ENCODE measurements at regions of chr7 and their contacts with region 1.

Region 1: DNA sequence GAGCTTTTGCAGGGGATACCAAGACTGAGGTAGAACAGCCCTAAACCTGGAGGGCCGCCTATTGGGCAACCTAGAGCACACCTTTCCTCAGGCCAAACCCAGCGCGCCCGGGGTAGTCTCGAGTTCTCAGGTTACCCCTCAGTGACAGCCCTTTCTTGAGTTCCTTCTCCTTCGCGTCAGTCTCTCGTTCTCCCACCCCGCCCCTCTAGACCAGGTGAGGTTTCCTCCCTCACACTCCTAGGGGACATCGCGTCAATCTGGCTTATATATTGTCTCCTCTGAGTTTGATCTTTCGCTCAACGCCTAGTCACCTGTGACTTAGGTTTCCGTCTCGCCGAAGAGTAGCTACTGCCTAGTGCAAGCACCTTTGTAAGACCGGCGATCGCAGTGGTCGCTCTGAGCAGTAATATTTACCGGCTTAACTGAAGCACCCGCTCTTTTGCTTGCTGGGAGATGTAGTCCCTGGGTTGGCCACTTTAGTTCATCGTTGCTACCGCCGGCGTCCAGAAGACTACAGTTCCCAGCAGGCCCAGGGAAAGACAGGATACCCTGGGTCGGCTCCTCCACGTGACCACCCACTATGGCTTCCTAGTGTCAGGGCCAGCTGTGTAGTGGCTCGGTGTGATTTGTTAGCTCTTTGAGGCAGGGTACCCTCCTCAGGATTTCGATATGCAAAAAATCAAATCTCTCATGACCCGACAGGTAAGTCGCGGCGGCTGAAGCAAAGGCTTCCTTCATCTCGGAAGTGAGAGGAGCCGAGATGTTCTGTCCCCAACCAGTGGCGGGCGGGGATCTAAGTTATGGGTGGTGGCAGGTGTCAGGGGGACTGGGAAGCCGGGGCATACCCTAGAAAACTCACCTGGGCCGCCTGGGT is at the start of gene VPS50:
- DNase-seq: peak; percentile 89
- H3K4me3 Mint-ChIP-seq: peak within 1 kb of the TSS; percentile 96
- H3K27ac Mint-ChIP-seq: peak within 1 kb of the TSS; percentile 85
- H3K4me1 Mint-ChIP-seq: peaks cover 13% of the 10 kb centered on the region
- H3K27me3 Mint-ChIP-seq: peaks cover 4% of the 10 kb centered on the region
- total RNA-seq, gene VPS50: 14.8 and 15.6 TPM in 2 replicates

Region 2: GRCh38 chr7:92245487-92246362 is 986.3 kb before region 1 on chr7 and contains the starts of genes ANKIB1 and KRIT1:
- intact Hi-C with region 1: loop called (anchors 5 kb)
- DNase-seq: peak; percentile 83
- H3K4me3 Mint-ChIP-seq: peak within 1 kb of the TSS; percentile 100
- H3K27ac Mint-ChIP-seq: peak within 1 kb of the TSS; percentile 100
- H3K4me1 Mint-ChIP-seq: peaks cover 30% of the 10 kb centered on the region
- H3K27me3 Mint-ChIP-seq: no peaks in the 10 kb centered on the region
- total RNA-seq, gene ANKIB1: 50.4 and 55.0 TPM in 2 replicates
- total RNA-seq, gene KRIT1: 37.4 and 43.0 TPM in 2 replicates

Region 3: DNA sequence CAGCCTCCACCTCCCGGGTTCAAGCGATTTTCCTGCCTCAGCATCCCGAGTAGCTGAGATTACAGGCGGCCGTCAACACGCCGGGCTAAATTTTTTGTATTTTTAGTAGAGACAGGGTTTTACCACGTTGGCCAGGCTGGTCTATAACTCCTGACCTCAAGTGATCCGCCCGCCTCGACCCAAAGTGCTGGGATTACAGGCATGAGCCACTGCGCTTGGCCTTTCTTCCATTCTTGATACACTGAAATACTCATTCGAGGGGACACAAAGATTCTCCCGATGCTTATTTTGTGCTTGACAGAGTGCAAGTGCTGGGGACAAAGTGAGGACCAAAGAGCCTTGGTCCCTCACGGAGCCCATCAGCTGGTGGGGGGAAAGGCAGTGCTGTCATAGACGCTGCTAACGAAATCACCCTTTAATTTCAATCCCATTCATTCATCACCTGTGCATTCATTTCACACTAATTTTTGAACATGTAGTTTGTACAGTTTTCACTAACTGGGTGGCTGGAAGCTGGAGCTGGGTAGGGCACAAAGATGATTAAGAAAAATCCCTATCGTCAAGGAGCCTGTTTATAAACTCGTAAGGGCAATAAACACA is 641.2 kb before region 1 on chr7:
- intact Hi-C with region 1: loop called (anchors 5 kb)
- DNase-seq: no peak
- H3K4me3 Mint-ChIP-seq: peak overlapping the region; percentile 93
- H3K27ac Mint-ChIP-seq: no peak overlapping the region
- H3K4me1 Mint-ChIP-seq: peaks cover 41% of the 10 kb centered on the region
- H3K27me3 Mint-ChIP-seq: no peaks in the 10 kb centered on the region

Region 4: GRCh38 chr7:93117852-93118530 is 114.0 kb before region 1 on chr7 and contains the start of gene SAMD9:
- intact Hi-C with region 1: loop called (anchors 1 kb)
- DNase-seq: peak; percentile 58
- H3K4me3 Mint-ChIP-seq: peak within 1 kb of the TSS; percentile 85
- H3K27ac Mint-ChIP-seq: peak within 1 kb of the TSS; percentile 90
- H3K4me1 Mint-ChIP-seq: peaks cover 38% of the 10 kb centered on the region
- H3K27me3 Mint-ChIP-seq: no peaks in the 10 kb centered on the region
- total RNA-seq, gene SAMD9: 9.3 and 9.4 TPM in 2 replicates

Region 5: GRCh38 chr7:93160410-93160809 is 71.6 kb before region 1 on chr7:
- intact Hi-C with region 1: loop called (anchors 5 kb)
- DNase-seq: no peak
- H3K4me3 Mint-ChIP-seq: no peak overlapping the region
- H3K27ac Mint-ChIP-seq: peak overlapping the region; percentile 58
- H3K4me1 Mint-ChIP-seq: peaks cover 16% of the 10 kb centered on the region
- H3K27me3 Mint-ChIP-seq: no peaks in the 10 kb centered on the region

Region 6: GRCh38 chr7:93249491-93250148 is 17.6 kb after region 1 on chr7:
- intact Hi-C with region 1: no loop called
- DNase-seq: no peak
- H3K4me3 Mint-ChIP-seq: no peak overlapping the region
- H3K27ac Mint-ChIP-seq: no peak overlapping the region
- H3K4me1 Mint-ChIP-seq: no peaks in the 10 kb centered on the region
- H3K27me3 Mint-ChIP-seq: no peaks in the 10 kb centered on the region

Region 7: GRCh38 chr7:93315896-93316295 is 83.9 kb after region 1 on chr7:
- intact Hi-C with region 1: no loop called
- DNase-seq: no peak
- H3K4me3 Mint-ChIP-seq: no peak overlapping the region
- H3K27ac Mint-ChIP-seq: no peak overlapping the region
- H3K4me1 Mint-ChIP-seq: peaks cover 12% of the 10 kb centered on the region
- H3K27me3 Mint-ChIP-seq: no peaks in the 10 kb centered on the region

Measured in activated T-helper 2 cell treated with anti-CD3 and anti-CD28 coated beads, Interferon-gamma antibody, Interleukin-2, Interleukin-4, amounts not matched to agents 10 μg/mL and 5 μg/mL and 100 μg/mL, durations not matched to agents 14 hours and 24 hours and 36 hours (primary cell).